Stomach (tissue), 19 donors: ENCODE measurements at regions of chr4 and their contacts with region 1.

Region 1: DNA sequence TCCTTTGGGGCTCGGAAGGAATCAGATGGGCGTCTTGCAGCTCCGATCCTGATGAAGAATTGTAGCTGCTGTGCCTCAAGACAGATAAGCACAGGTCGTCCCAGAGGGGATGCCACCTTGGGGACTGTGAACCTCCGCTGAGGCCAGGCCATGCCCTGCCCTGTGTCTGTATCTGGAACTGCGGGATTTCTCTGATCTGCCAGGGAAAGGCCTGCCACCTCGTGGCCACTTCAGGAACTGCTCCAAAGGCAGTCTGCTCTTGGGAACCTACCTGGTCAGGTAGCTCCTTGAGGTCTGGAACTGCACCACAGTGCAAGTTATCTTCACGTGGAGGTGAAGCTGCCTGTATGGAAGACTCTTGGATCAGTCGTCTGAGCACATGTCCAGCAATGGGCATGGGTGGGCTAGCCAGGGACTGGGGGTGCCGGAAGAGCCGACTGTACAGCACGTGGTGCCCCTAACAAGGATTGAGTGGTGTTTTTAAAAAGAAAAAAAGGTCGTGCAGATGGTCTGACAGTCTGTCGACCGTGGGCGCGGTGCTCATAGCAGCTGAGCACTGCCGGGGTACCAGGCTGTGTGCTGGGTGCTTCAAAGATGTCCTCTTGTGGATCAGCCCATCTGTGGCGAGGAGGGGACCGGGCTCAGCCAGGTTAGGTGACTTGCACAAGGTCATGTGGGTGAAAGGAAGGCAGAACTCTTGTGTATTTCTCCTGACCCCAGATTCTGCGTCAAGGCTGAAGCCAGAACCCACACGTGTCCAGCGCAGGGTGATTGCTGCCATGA is 3.1 kb upstream of the GRPEL1 start:
- DNase-seq: peak; percentile 92 to 95
- H3K4me3 ChIP-seq: no peak overlapping the region
- H3K27ac ChIP-seq: no peak overlapping the region
- H3K4me1 ChIP-seq: peaks cover 21 to 37% (median 33%) of the 10 kb centered on the region in 4 donors
- H3K27me3 ChIP-seq: no peaks in the 10 kb centered on the region
- CTCF ChIP-seq: peak in 6 of 7 experiments; percentile 97 to 99 (median 99)
- EP300 ChIP-seq: no peak
- POLR2A ChIP-seq: no peak

Region 2: GRCh38 chr4:6134612-6135220 is 936.2 kb before region 1 on chr4:
- intact Hi-C with region 1: no loop called
- DNase-seq: no peak
- H3K4me3 ChIP-seq: no peak overlapping the region
- H3K27ac ChIP-seq: no peak overlapping the region
- H3K4me1 ChIP-seq: no peaks in the 10 kb centered on the region
- H3K27me3 ChIP-seq: no peaks in the 10 kb centered on the region
- CTCF ChIP-seq: no peak
- EP300 ChIP-seq: no peak
- POLR2A ChIP-seq: no peak

Region 3: DNA sequence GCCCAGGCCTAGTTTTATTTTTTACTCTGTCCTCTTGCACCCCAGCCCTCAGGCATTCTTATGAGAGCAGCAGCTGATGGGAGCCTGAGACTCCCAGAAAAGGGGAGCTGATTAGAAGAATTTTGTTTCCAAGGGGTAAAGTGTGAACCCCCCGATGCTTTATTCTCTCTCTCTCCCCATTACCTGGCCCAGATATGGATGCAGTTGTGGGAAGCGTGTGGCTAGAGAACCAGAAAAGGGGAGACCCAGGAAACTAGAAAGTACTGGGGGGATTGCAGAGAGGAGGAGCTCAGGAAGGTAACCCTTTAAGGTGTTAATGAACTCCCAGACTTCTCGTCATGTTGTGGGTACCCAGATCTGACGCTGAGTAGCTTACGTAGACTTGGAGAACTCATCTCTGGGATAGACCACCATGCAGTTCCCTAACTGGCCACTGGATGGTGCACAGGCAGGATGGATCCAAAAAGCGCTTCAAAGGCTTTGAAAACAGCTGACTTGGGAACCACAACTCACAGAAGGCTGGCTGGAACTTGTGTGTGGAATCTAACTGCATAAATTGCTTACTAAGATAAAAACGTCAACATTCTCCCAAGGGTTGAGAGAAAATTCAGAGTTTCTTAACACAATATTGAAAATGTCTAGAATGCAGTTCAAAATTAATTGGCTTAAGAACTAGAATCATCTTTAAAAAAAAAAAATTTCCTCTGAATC is 96.6 kb before region 1 on chr4:
- intact Hi-C with region 1: loop called (anchors 10 kb)
- DNase-seq: peak; percentile 82 to 95
- H3K4me3 ChIP-seq: no peak overlapping the region
- H3K27ac ChIP-seq: peak overlapping the region in 1 of 5 donors; percentile 38
- H3K4me1 ChIP-seq: peaks cover 0 to 21% (median 12%) of the 10 kb centered on the region in 4 donors
- H3K27me3 ChIP-seq: no peaks in the 10 kb centered on the region
- CTCF ChIP-seq: peak in 6 of 7 experiments; percentile 57 to 98 (median 96)
- EP300 ChIP-seq: no peak
- POLR2A ChIP-seq: no peak